ENCODE measurements at regions of chr20 and their contacts with region 1.

Region 1: DNA sequence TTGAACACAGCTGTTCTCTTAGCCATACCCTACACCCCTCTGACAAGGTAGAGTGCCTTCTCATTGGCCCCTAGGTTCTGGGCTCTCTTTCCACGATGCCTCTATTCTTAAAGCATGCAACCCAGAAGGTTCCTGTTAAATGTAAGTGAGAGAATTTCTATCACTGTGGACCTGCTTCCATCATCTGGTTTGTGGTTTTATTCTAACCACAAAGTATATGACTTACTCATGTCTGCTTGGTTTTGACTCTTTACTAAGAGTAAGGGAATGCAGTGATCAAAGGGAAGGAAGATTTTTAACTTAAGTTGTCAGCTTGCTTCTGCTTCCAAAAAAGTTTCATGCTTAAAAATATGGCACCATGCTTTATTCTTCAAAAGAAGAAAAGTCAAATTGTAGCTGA is 80.2 kb downstream of the ANKEF1 start:
- DNase-seq: peak; percentile 40
- H3K4me3 Mint-ChIP-seq: no peak overlapping the region
- H3K27ac Mint-ChIP-seq: no peak overlapping the region
- H3K4me1 Mint-ChIP-seq: peaks cover 8% of the 10 kb centered on the region
- H3K27me3 Mint-ChIP-seq: no peaks in the 10 kb centered on the region
- CTCF ChIP-seq: no peak

Region 2: GRCh38 chr20:9963029-9963428 is 152.0 kb before region 1 on chr20:
- CTCF ChIA-PET with region 1: no interaction called
- POLR2A ChIA-PET with region 1: no interaction called
- intact Hi-C with region 1: no loop called
- DNase-seq: no peak
- H3K4me3 Mint-ChIP-seq: no peak overlapping the region
- H3K27ac Mint-ChIP-seq: no peak overlapping the region
- H3K4me1 Mint-ChIP-seq: no peaks in the 10 kb centered on the region
- H3K27me3 Mint-ChIP-seq: no peaks in the 10 kb centered on the region
- CTCF ChIP-seq: no peak

Region 3: DNA sequence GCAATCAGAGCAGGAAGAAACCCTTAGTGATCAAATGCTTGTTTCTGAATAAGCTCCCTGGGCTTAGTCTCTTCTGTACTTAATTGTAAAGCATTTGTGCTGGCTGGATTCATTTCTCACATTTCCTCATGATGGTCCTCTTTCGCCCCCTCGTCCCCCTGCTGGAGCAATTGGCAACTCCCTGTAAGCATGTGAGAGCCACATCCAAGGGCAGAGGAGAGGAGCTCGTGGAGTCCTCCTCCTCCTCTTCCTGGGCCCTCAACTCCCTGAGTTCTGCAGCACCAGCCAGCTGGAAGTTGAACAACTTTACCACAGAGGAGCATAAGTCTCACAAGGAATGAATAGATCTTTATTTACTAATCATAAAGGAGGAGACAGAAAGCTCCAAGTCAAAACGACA is 67.6 kb before region 1 on chr20:
- CTCF ChIA-PET with region 1: no interaction called
- POLR2A ChIA-PET with region 1: no interaction called
- intact Hi-C with region 1: no loop called
- DNase-seq: peak; percentile 18
- H3K4me3 Mint-ChIP-seq: no peak overlapping the region
- H3K27ac Mint-ChIP-seq: no peak overlapping the region
- H3K4me1 Mint-ChIP-seq: no peaks in the 10 kb centered on the region
- H3K27me3 Mint-ChIP-seq: no peaks in the 10 kb centered on the region
- CTCF ChIP-seq: no peak

Region 4: DNA sequence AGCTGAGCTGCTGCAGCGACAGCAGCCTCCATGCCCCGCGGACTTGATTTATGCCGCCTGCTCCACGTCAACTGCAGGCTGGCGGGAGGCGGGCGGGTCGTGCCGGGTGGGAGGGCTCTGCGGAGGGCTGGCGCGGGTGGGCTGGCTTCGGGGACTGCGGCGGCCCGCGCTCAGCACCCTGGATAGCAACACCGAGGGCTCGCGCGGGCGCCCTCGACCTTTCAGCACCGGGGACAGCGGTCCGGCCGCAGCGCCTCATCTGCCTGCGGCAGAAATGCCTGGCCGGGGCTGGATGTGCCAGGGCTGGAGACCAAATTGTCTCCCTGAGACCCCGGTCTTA is 104.4 kb after region 1 on chr20:
- CTCF ChIA-PET with region 1: no interaction called
- POLR2A ChIA-PET with region 1: no interaction called
- intact Hi-C with region 1: loop called (anchors 1 kb)
- DNase-seq: peak; percentile 63
- H3K4me3 Mint-ChIP-seq: peak overlapping the region; percentile 40
- H3K27ac Mint-ChIP-seq: no peak overlapping the region
- H3K4me1 Mint-ChIP-seq: peaks cover 5% of the 10 kb centered on the region
- H3K27me3 Mint-ChIP-seq: peaks cover 67% of the 10 kb centered on the region
- CTCF ChIP-seq: no peak

Region 5: GRCh38 chr20:10239954-10240353 is 124.9 kb after region 1 on chr20:
- CTCF ChIA-PET with region 1: no interaction called
- POLR2A ChIA-PET with region 1: no interaction called
- intact Hi-C with region 1: loop called (anchors 1 kb)
- DNase-seq: peak; percentile 86
- H3K4me3 Mint-ChIP-seq: no peak overlapping the region
- H3K27ac Mint-ChIP-seq: no peak overlapping the region
- H3K4me1 Mint-ChIP-seq: peaks cover 6% of the 10 kb centered on the region
- H3K27me3 Mint-ChIP-seq: no peaks in the 10 kb centered on the region
- CTCF ChIP-seq: no peak